ENCODE measurements at regions of chr7 and their contacts with region 1.

Region 1: GRCh38 chr7:88401007-88401623 is 94.4 kb upstream of the STEAP4 start:
- DNase-seq: no peak
- ATAC-seq: peak; percentile 55
- H3K4me3 ChIP-seq: no peak overlapping the region
- H3K27ac ChIP-seq: no peak overlapping the region
- H3K4me1 ChIP-seq: no peaks in the 10 kb centered on the region
- H3K27me3 ChIP-seq: no peaks in the 10 kb centered on the region
- CTCF ChIP-seq: peak; percentile 47 to 60 (median 58)
- EP300 ChIP-seq: no peak
- POLR2A ChIP-seq: no peak
- RAD21 ChIP-seq: peak; percentile 56

Region 2: DNA sequence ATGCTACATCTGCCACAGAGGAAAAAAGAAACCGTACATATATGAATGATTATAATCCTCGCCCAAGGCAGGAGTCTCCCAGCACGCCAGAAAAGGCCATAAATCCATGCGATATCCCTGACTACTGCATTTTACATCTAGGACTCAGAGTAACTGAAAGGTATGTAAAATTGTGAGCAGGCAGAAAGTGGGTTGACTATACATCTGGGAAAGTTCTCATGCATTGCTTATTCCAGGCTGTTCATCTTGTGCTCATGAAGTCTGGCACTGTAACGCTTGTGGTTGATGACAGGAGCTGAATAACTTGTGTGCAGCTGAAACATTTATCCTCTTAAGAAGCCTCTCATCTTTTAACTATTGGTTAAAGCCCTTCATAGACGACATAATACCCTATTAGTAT is 99.0 kb after region 1 on chr7:
- CTCF ChIA-PET with region 1: no interaction called
- POLR2A ChIA-PET with region 1: no interaction called
- RAD21 ChIA-PET with region 1: no interaction called
- SMC1A ChIA-PET with region 1: no interaction called
- in situ Hi-C with region 1: no loop called
- intact Hi-C with region 1: no loop called
- DNase-seq: no peak
- ATAC-seq: no peak
- H3K4me3 ChIP-seq: no peak overlapping the region
- H3K27ac ChIP-seq: no peak overlapping the region
- H3K4me1 ChIP-seq: no peaks in the 10 kb centered on the region
- H3K27me3 ChIP-seq: no peaks in the 10 kb centered on the region
- CTCF ChIP-seq: no peak
- EP300 ChIP-seq: no peak
- POLR2A ChIP-seq: no peak
- RAD21 ChIP-seq: no peak

Region 3: DNA sequence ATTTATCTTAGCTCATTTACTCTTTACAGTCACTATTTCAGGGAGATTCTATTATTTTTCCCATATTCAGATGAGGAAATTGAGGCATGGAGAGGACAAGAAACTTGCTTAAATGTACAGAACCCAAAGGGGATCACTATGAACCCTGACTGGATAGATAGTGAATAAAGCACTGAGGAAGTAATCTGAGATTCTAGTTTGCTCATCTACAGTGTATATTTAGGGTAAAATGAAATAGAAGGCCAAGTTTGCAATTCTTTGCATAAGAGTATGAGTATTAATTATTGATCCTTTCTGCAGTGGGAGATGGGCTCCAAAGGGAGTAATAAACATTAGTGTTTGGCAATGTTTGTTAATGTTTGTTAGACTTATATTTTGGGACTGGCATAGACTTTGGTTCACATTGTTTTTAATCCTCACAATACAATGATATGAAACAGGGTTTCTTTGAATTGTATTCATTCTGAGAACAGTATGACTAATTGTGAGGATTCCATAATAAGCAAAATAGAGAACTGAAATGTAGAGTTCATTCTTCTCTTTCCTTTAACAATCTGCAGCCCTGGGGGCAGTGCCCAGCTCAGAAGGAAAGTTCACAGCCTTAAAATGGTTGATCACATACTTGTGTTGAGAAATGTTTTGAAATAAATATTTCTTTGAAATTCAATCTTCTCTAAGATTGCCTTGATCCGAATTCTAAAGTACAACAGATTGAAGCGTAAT is 227.4 kb after region 1 on chr7:
- CTCF ChIA-PET with region 1: no interaction called
- POLR2A ChIA-PET with region 1: no interaction called
- RAD21 ChIA-PET with region 1: no interaction called
- SMC1A ChIA-PET with region 1: no interaction called
- in situ Hi-C with region 1: no loop called
- intact Hi-C with region 1: loop called (anchors 2 kb)
- DNase-seq: peak; percentile 66
- ATAC-seq: peak; percentile 99
- H3K4me3 ChIP-seq: no peak overlapping the region
- H3K27ac ChIP-seq: peak overlapping the region; percentile 61
- H3K4me1 ChIP-seq: no peaks in the 10 kb centered on the region
- H3K27me3 ChIP-seq: no peaks in the 10 kb centered on the region
- CTCF ChIP-seq: no peak
- EP300 ChIP-seq: peak; percentile 94 to 98
- POLR2A ChIP-seq: no peak
- RAD21 ChIP-seq: no peak

Region 4: GRCh38 chr7:88835147-88835728 is 434.1 kb after region 1 on chr7:
- CTCF ChIA-PET with region 1: interaction called, 11 read pairs
- POLR2A ChIA-PET with region 1: no interaction called
- RAD21 ChIA-PET with region 1: interaction called, 6 read pairs
- SMC1A ChIA-PET with region 1: interaction called, 7 read pairs
- in situ Hi-C with region 1: no loop called
- intact Hi-C with region 1: loop called (anchors 1 kb)
- DNase-seq: peak; percentile 15
- ATAC-seq: peak; percentile 97
- H3K4me3 ChIP-seq: no peak overlapping the region
- H3K27ac ChIP-seq: no peak overlapping the region
- H3K4me1 ChIP-seq: no peaks in the 10 kb centered on the region
- H3K27me3 ChIP-seq: no peaks in the 10 kb centered on the region
- CTCF ChIP-seq: peak; percentile 47 to 63 (median 59)
- EP300 ChIP-seq: 0 out of 4 replicates have a peak, but pooled peaks of 1 of the 2 experiments have one; percentile 19
- POLR2A ChIP-seq: no peak
- RAD21 ChIP-seq: peak; percentile 71